ENCODE measurements at regions of chr3 and their contacts with region 1.

Region 1: DNA sequence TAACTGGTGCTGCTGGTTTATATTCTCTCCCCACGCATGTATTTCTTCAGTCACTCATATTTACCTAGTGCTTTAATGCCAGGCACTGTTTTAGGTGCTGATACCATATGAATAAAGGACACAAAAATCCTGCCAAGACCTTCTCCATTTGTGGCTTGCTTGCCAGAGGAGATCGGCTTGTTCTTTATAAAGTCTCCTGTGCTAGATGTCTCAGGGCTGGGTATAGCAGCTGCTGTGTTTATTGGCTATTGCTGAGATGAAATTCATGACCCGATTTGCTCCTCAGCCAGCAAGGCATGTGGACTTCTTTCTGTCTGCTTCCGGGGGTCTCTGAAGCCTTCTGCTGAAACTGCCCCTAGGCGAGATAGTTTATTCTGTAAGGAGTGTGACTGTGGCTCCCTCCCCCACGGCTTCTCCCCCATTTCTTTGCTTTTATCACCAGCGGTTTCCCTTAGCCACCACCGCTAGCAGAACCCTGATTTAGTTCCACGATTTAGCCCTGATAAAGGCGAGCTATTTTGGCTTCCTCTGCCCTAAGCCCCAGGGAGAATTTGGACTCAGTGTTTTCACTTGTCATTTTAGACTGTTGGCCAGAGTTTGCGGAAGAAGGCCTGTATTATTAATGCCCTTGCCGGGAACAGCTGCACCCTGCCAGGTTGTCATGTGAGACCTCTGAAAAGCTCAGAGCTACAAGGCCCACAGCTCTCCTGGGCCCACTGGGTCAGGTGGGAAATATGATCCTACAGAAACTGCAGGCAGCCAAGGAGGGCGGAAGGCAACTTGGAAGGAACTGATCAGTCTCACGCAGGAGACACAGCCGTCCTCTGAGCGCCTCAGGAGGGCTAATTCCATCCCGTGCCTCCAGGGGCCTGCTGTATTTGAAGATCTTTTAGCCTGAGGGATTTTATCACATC is 46.8 kb downstream of the ST6GAL1 start:
- DNase-seq: peak in 2 of 3 donors; percentile 29 to 49
- H3K4me3 ChIP-seq: no peak overlapping the region
- H3K27ac ChIP-seq: no peak overlapping the region
- H3K4me1 ChIP-seq: peaks cover 0 to 9% (median 5%) of the 10 kb centered on the region in 4 experiments
- H3K27me3 ChIP-seq: no peaks in the 10 kb centered on the region

Region 2: DNA sequence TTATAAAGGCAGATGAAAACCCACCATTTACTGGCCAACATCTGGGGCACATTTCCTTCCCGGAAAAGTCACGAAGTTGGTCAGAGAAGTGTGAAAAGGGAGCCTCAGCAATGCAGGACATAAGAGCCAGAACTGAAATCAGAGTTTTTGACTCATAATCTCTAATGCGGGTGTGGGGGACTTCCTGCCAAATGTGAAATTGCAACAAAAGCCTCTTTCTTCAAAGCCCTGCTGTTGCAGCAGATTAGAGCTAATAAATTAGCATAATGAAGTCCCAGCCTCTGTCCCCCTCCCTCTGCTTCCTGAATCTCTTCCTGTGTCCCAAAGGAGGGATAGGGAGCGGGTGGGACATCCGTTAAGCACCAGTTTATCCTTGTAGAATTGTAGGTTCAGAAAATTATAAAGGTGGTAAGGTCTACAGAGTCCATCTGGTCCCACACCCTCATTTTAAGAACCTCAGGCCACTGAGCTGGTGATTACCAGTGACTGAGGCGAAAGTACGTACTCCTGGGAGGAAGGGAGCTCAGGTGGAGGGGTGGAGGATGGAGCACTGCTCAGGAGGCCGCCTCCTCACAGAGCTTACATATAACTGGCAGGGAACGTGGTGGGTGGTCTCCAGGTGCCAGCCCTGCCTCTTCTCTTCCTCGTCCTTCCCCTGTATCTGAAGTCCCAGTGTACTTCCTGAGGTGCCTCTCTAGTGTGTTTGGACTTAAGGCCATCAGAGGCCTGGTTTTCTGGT is 11.8 kb before region 1 on chr3:
- CTCF ChIA-PET with region 1: interaction called, 11 read pairs
- POLR2A ChIA-PET with region 1: no interaction called
- DNase-seq: no peak
- H3K4me3 ChIP-seq: no peak overlapping the region
- H3K27ac ChIP-seq: no peak overlapping the region
- H3K4me1 ChIP-seq: peaks cover 0 to 20% (median 14%) of the 10 kb centered on the region in 4 experiments
- H3K27me3 ChIP-seq: no peaks in the 10 kb centered on the region